ENCODE measurements at regions of chr9 and their contacts with region 1.

Region 1: DNA sequence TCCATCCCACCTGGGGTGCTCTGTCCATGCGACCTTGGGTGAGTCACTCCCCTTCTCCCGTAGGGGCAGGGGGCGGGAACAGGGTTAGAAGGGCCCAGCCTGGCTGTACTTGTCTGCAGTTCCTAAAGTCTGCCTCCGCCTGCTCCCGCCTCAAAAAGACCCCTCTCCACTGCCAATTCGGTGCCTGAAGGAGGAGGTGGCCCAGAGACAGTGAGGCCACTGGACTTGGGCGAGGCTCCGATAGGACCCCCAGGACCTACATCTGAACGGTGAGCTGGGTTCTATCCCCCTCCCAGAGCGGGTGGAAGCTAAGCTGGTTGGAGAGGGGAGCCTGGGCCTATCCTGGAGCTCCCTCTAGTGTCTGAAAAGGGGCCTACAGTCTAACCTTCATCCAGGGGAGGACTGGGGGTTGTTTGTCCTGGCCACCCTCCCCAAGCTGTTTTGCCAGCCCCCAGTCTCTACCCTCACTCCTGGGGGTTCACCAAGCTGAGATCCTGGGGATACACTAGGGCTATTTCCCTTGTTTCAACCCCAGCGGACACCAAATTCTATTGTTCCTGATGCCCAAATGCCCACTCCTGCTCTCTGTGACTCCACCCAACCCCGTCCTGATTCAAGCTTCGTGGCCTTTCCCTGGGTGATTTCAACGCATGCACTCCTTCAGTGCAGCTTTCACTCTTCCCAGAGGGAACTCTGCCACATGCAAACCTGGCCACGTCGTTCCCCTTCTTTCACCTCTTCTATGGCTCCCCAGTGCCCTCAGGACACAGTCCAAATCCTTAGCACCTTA is 6.1 kb upstream of the CRB2 start:
- DNase-seq: peak; percentile 46 to 91
- H3K4me3 ChIP-seq: peak overlapping the region in 1 of 4 experiments; percentile 35; a peak in 1 of 8 replicates
- H3K27ac ChIP-seq: no peak overlapping the region
- H3K4me1 ChIP-seq: peaks cover 0 to 11% (median under 1%) of the 10 kb centered on the region in 4 experiments; a peak in 4 of 7 replicates
- H3K27me3 ChIP-seq: no peaks in the 10 kb centered on the region; a peak in 2 of 7 replicates
- CTCF ChIP-seq: peak in 2 of 3 experiments; percentile 91 to 96; a peak in 3 of 4 replicates
- EP300 ChIP-seq: no peak
- POLR2A ChIP-seq: no peak
- RAD21 ChIP-seq: peak; percentile 100

Region 2: DNA sequence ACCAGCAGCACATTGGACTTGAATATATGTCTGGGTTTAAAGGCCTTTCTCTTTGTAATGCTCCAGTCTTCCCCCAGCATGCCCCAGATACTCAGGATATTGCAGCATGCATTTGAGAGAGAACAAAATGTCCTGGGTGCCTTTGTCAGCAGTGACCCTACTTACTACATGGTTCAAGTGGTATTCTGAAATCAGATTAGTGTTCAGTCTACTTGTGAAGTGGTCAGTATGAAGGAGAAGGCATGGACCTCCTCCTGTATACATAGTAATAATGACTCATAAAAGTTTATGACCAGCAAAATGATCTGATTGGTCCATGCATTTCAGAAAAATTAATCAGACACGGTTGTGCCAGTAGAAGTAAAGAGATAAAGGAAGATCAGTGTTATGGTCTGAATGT is 291.1 kb before region 1 on chr9:
- CTCF ChIA-PET with region 1: no interaction called
- POLR2A ChIA-PET with region 1: no interaction called
- DNase-seq: no peak
- H3K4me3 ChIP-seq: no peak overlapping the region
- H3K27ac ChIP-seq: no peak overlapping the region
- H3K4me1 ChIP-seq: peaks cover 0 to 2% (median 0%) of the 10 kb centered on the region in 4 experiments; a peak in 1 of 7 replicates
- H3K27me3 ChIP-seq: no peaks in the 10 kb centered on the region
- CTCF ChIP-seq: no peak
- EP300 ChIP-seq: no peak
- POLR2A ChIP-seq: no peak
- RAD21 ChIP-seq: no peak

Region 3: GRCh38 chr9:123091459-123091858 is 258.4 kb before region 1 on chr9:
- CTCF ChIA-PET with region 1: interaction called, 10 read pairs
- POLR2A ChIA-PET with region 1: interaction called, 5 read pairs
- DNase-seq: no peak
- H3K4me3 ChIP-seq: no peak overlapping the region
- H3K27ac ChIP-seq: no peak overlapping the region
- H3K4me1 ChIP-seq: no peaks in the 10 kb centered on the region
- H3K27me3 ChIP-seq: no peaks in the 10 kb centered on the region
- CTCF ChIP-seq: peak in 2 of 3 experiments; percentile 18 to 34; a peak in 2 of 4 replicates
- EP300 ChIP-seq: no peak
- POLR2A ChIP-seq: no peak
- RAD21 ChIP-seq: peak in 1 of 2 experiments; percentile 10; a peak in 2 of 4 replicates

Region 4: GRCh38 chr9:123119566-123119965 is 230.3 kb before region 1 on chr9:
- CTCF ChIA-PET with region 1: interaction called, 20 read pairs
- POLR2A ChIA-PET with region 1: interaction called, 3 read pairs
- DNase-seq: no peak
- H3K4me3 ChIP-seq: no peak overlapping the region
- H3K27ac ChIP-seq: no peak overlapping the region
- H3K4me1 ChIP-seq: peaks cover 0 to 4% (median 0%) of the 10 kb centered on the region in 4 experiments; a peak in 1 of 7 replicates
- H3K27me3 ChIP-seq: no peaks in the 10 kb centered on the region
- CTCF ChIP-seq: no peak
- EP300 ChIP-seq: no peak
- POLR2A ChIP-seq: no peak
- RAD21 ChIP-seq: no peak

Region 5: GRCh38 chr9:123318202-123318601 is 31.7 kb before region 1 on chr9:
- CTCF ChIA-PET with region 1: interaction called, 29 read pairs
- POLR2A ChIA-PET with region 1: no interaction called
- DNase-seq: no peak
- H3K4me3 ChIP-seq: no peak overlapping the region
- H3K27ac ChIP-seq: no peak overlapping the region
- H3K4me1 ChIP-seq: peaks cover 0 to 6% (median 2%) of the 10 kb centered on the region in 4 experiments; a peak in 4 of 7 replicates
- H3K27me3 ChIP-seq: no peaks in the 10 kb centered on the region
- CTCF ChIP-seq: no peak
- EP300 ChIP-seq: no peak
- POLR2A ChIP-seq: no peak
- RAD21 ChIP-seq: no peak

Region 6: GRCh38 chr9:123360161-123361085 is 10.5 kb after region 1 on chr9:
- CTCF ChIA-PET with region 1: interaction called, 44 read pairs
- POLR2A ChIA-PET with region 1: interaction called, 6 read pairs
- DNase-seq: peak; percentile 91 to 100
- H3K4me3 ChIP-seq: peak overlapping the region in 1 of 4 experiments; percentile 24; a peak in 1 of 8 replicates
- H3K27ac ChIP-seq: no peak overlapping the region
- H3K4me1 ChIP-seq: peaks cover 17 to 47% (median 37%) of the 10 kb centered on the region in 4 experiments
- H3K27me3 ChIP-seq: no peaks in the 10 kb centered on the region; a peak in 1 of 7 replicates
- CTCF ChIP-seq: no peak
- EP300 ChIP-seq: no peak
- POLR2A ChIP-seq: no peak
- RAD21 ChIP-seq: no peak

Measured in H1 (cell line).